ENCODE measurements at regions of chr16 and their contacts with region 1.

Region 1: GRCh38 chr16:82995924-82996441 is 369.2 kb downstream of the CDH13 start:
- DNase-seq: peak; percentile 96
- H3K4me3 ChIP-seq: peak overlapping the region in 1 of 3 experiments; percentile 31
- H3K27ac ChIP-seq: peak overlapping the region; percentile 91
- H3K4me1 ChIP-seq: peaks cover 23% of the 10 kb centered on the region
- H3K27me3 ChIP-seq: no peaks in the 10 kb centered on the region
- CTCF ChIP-seq: no peak
- POLR2A ChIP-seq: no peak

Region 2: DNA sequence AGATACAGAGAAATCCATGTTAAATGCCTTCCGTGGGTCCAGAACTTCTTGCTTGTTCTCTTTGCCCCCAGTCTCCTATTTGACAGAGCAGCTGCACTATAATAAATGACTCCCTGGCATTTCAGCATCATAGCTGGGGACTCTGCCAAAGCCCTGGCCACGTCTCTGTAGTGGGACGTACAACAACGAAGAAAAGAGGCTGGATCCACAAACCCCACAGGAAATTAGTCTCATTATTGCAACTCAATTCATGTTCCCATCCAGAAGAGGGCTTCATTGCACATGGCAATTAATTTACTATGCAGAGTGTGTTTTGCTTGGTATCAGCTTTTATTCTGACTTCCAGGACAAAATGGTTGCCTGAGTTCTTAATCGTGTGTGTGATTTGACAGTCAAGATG is 248.0 kb before region 1 on chr16:
- CTCF ChIA-PET with region 1: interaction called, 3 read pairs
- POLR2A ChIA-PET with region 1: no interaction called
- dilution Hi-C with region 1: no loop called
- intact Hi-C with region 1: loop called (anchors 1 kb)
- DNase-seq: peak; percentile 94
- H3K4me3 ChIP-seq: peak overlapping the region in 1 of 3 experiments; percentile 7
- H3K27ac ChIP-seq: peak overlapping the region; percentile 57
- H3K4me1 ChIP-seq: peaks cover 38% of the 10 kb centered on the region
- H3K27me3 ChIP-seq: no peaks in the 10 kb centered on the region
- CTCF ChIP-seq: peak; percentile 29 to 40
- POLR2A ChIP-seq: no peak

Region 3: DNA sequence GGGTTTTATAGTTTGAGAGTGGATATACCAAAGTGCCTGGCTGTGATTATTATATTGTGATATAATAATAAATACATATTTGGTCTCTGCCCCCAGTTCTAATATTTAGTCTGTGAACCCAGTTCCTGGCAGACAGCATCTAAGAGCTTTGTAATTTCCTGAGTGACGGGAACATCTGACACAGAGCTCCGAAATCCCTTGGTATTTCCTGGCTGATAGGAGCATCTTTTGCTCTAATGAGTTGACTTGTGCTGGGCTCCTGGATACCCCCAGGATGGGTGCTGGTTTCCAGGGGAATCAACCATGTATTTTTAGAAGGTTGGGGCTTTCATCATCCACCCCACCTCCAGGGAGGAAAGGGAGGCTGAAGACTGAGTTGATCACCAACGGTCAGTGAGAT is 181.9 kb before region 1 on chr16:
- CTCF ChIA-PET with region 1: no interaction called
- POLR2A ChIA-PET with region 1: no interaction called
- dilution Hi-C with region 1: no loop called
- intact Hi-C with region 1: loop called (anchors 1 kb)
- DNase-seq: peak; percentile 46
- H3K4me3 ChIP-seq: no peak overlapping the region
- H3K27ac ChIP-seq: peak overlapping the region; percentile 41
- H3K4me1 ChIP-seq: peaks cover 23% of the 10 kb centered on the region
- H3K27me3 ChIP-seq: no peaks in the 10 kb centered on the region
- CTCF ChIP-seq: no peak
- POLR2A ChIP-seq: no peak

Region 4: DNA sequence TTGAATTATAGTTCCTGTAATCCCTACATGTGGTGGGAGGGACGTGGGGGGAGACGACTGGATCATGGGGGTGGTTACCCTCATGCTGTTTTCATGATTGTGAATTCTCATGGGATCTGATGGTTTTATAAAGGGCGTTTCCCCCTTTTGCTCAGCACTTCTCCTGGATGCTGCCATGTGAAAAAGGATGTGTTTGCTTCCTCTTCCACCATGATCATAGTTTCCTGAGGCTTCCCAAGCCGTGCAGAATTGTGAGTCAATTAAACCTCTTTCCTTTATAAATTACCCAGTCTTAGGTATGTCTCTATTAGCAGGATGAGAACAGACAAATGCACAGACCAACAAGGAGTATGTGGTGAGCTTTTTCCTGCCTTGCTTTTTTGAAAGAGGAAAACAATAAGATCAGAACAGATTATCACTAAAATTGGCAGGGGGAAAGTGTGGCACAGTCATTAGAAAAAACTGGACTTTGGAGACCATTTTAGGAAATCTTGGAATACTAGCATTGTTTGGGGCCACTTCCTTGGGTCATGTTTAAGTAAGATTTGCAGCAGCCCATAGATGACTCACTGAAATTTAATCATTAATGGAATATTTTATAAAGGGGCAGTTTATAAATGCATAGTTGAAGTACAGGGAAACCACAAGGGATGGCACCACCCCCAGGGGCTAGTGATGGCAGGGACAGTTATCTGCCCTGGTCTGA is 16.4 kb before region 1 on chr16:
- CTCF ChIA-PET with region 1: interaction called, 4 read pairs
- POLR2A ChIA-PET with region 1: no interaction called
- dilution Hi-C with region 1: no loop called
- intact Hi-C with region 1: loop called (anchors 1 kb)
- DNase-seq: peak; percentile 88
- H3K4me3 ChIP-seq: no peak overlapping the region
- H3K27ac ChIP-seq: peak overlapping the region; percentile 62
- H3K4me1 ChIP-seq: peaks cover 23% of the 10 kb centered on the region
- H3K27me3 ChIP-seq: no peaks in the 10 kb centered on the region
- CTCF ChIP-seq: no peak
- POLR2A ChIP-seq: no peak

Region 5: DNA sequence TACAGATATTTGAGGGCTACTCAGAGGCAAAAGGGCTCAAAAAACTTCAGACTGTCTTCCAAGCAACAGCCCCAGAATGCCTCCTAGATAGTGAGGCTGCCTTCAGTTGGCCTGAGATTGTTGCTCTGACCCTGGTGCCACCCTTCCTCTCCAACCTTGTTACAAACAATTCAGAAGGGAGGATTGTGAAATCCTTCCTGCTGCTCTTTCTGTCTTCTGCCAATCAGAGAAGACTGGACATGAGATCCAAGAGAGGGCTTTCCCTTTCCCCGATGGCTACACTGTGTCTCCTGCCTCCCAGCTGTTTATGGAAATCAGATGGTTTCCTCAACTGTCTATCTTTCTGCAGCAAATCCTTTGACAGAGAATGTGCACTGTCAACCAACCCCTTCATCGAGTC is 50.7 kb after region 1 on chr16:
- CTCF ChIA-PET with region 1: no interaction called
- POLR2A ChIA-PET with region 1: no interaction called
- dilution Hi-C with region 1: no loop called
- intact Hi-C with region 1: no loop called
- DNase-seq: peak; percentile 17
- H3K4me3 ChIP-seq: no peak overlapping the region
- H3K27ac ChIP-seq: no peak overlapping the region
- H3K4me1 ChIP-seq: peaks cover 9% of the 10 kb centered on the region
- H3K27me3 ChIP-seq: no peaks in the 10 kb centered on the region
- CTCF ChIP-seq: no peak
- POLR2A ChIP-seq: no peak

Region 6: DNA sequence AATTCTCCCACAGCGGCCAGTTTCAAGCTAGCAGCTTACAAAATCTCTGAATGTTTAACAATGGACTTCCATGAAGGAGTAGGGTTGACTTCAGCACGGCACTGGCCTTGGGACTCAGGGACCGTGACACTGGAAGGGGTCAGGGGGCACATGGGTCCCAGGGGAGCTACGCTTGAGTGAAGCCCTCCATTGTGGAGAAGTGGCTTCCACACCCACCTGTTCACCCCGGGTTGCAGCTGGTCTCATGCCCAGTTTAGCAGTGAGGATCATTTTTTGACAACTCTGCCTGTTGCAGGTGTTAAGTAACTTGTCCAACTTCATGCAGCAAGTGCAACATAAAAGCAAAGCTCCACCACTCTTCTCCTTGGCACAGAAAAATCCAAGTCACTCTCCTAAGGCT is 140.9 kb after region 1 on chr16:
- CTCF ChIA-PET with region 1: no interaction called
- POLR2A ChIA-PET with region 1: no interaction called
- dilution Hi-C with region 1: no loop called
- intact Hi-C with region 1: no loop called
- DNase-seq: no peak
- H3K4me3 ChIP-seq: no peak overlapping the region
- H3K27ac ChIP-seq: no peak overlapping the region
- H3K4me1 ChIP-seq: no peaks in the 10 kb centered on the region
- H3K27me3 ChIP-seq: no peaks in the 10 kb centered on the region
- CTCF ChIP-seq: no peak
- POLR2A ChIP-seq: no peak